Breast epithelium (tissue), 4 donors: ENCODE measurements at regions of chr14 and their contacts with region 1.

Region 1: GRCh38 chr14:22929848-22930364 is 730 bp upstream of the PRMT5 start:
- DNase-seq: no peak
- H3K4me3 ChIP-seq: peak overlapping the region; percentile 72 to 95 (median 93)
- H3K27ac ChIP-seq: peak overlapping the region; percentile 95 to 97
- H3K4me1 ChIP-seq: peaks cover 3 to 11% of the 10 kb centered on the region in 2 donors
- H3K27me3 ChIP-seq: no peaks in the 10 kb centered on the region
- CTCF ChIP-seq: no peak
- POLR2A ChIP-seq: no peak

Region 2: GRCh38 chr14:22900081-22900799 is 29.7 kb before region 1 on chr14:
- intact Hi-C with region 1: no loop called
- DNase-seq: no peak
- H3K4me3 ChIP-seq: no peak overlapping the region
- H3K27ac ChIP-seq: peak overlapping the region; percentile 19 to 35
- H3K4me1 ChIP-seq: no peaks in the 10 kb centered on the region
- H3K27me3 ChIP-seq: no peaks in the 10 kb centered on the region
- CTCF ChIP-seq: peak in 2 of 3 donors; percentile 26 to 28
- POLR2A ChIP-seq: no peak

Region 3: DNA sequence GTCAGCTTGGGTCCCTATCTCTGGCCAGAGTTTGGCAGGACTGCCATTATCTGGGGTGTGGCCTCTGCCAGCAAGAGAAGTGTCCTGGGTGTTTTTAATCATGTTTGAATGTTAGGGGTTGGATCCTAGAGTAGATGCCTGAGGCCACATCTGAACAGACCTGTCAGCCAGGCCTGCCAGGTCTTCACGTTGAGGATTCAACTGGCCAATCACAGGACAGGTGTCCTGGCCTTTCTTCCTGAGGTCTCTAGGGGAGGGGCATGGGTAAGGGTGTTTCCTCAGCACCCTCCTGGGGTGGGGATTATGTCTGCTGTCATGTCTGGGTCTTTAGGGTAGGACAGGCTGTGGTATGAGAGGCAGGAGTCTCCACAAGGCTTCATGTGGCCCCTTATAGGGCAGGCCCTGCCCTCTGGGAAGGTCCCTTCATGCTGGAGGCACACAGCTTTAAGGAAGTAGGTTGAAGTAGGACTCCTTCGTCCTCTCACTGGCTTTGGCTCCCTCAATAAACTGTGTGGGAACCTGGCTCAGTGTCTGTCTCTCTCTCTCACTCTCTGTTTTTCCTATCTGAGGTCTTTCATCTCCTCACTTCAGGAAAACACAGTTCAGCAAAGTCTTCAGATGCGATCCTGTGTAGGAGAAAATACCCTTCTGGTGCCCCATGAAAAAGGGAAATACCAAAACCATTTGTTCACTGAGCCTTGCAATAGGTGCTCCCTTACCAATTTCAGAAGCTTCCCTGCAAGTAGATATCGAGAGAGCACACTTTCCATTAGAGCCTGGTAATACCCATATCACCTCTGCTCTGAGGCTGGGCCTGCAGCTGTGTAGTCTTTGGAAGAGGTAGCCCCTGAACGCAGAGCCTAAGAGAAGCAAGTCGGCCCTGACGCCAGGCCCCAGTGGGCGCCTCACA is 1193.9 kb after region 1 on chr14:
- intact Hi-C with region 1: loop called (anchors 5 kb)
- DNase-seq: no peak
- H3K4me3 ChIP-seq: no peak overlapping the region
- H3K27ac ChIP-seq: no peak overlapping the region
- H3K4me1 ChIP-seq: no peaks in the 10 kb centered on the region
- H3K27me3 ChIP-seq: no peaks in the 10 kb centered on the region
- CTCF ChIP-seq: no peak
- POLR2A ChIP-seq: no peak